Astrocyte of the cerebellum (primary cell): ENCODE measurements at regions of chr3 and their contacts with region 1.

Region 1: DNA sequence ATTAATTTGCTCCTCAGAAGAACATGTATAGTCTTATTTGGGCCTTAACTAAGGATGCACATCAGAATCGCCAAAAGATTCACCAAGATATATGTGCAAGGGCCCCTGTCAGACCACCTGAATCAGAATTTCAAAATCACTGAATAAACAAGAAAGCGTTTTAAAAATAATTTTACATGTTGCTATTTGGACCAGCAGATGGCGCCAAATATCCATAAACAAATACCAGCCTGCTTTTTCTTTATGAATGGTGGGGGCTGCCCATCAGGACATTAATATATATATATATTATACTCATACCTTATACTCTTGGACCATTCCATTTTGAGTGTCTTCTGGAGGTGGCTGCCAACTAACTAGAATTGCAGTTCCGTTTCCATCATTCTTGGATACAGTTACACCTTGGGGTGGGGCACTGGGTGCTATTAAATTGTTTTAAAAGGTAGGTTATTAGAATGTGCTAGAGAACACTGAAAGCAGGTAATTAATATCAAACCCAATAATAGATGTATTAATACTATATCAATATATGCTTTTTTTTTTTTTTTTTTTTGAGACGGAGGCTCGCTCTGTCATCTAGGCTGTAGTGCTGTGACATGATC is 1108.3 kb downstream of the ROBO1 start:
- DNase-seq: peak; percentile 49
- H3K4me3 ChIP-seq: no peak overlapping the region
- CTCF ChIP-seq: peak; percentile 46

Region 2: DNA sequence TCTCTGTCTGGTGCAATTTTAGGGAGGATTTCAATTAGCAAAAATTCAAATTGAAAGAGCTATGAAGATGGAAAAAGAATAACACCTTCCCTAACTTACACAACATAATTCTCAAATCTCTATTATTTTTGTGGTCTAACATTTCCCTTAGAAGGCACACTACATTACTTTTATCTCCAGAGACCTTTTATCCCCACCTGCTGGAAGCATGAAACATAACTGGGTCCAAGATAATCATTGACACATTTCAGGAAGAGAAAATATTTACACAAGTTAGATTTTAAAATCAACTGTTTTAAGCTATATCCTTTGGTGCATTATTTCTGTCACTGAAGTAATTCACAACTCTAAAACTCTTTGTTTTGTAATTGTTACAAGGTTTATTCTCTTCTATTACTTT is 328.8 kb after region 1 on chr3:
- in situ Hi-C with region 1: loop called (anchors 25 kb)
- DNase-seq: no peak
- H3K4me3 ChIP-seq: no peak overlapping the region
- CTCF ChIP-seq: peak; percentile 37